GM12878 (cell line): ENCODE measurements at regions of chr16 and their contacts with region 1.

Region 1: GRCh38 chr16:86343027-86343787 is 167.1 kb upstream of the FOXF1 start:
- DNase-seq: no peak
- ATAC-seq: no peak
- H3K4me3 ChIP-seq: no peak overlapping the region
- H3K27ac ChIP-seq: no peak overlapping the region
- H3K4me1 ChIP-seq: no peaks in the 10 kb centered on the region
- H3K27me3 ChIP-seq: peaks cover 2 to 5% of the 10 kb centered on the region in 2 experiments; a peak in 3 of 4 replicates
- CTCF ChIP-seq: no peak
- EP300 ChIP-seq: no peak
- POLR2A ChIP-seq: no peak
- RAD21 ChIP-seq: no peak

Region 2: DNA sequence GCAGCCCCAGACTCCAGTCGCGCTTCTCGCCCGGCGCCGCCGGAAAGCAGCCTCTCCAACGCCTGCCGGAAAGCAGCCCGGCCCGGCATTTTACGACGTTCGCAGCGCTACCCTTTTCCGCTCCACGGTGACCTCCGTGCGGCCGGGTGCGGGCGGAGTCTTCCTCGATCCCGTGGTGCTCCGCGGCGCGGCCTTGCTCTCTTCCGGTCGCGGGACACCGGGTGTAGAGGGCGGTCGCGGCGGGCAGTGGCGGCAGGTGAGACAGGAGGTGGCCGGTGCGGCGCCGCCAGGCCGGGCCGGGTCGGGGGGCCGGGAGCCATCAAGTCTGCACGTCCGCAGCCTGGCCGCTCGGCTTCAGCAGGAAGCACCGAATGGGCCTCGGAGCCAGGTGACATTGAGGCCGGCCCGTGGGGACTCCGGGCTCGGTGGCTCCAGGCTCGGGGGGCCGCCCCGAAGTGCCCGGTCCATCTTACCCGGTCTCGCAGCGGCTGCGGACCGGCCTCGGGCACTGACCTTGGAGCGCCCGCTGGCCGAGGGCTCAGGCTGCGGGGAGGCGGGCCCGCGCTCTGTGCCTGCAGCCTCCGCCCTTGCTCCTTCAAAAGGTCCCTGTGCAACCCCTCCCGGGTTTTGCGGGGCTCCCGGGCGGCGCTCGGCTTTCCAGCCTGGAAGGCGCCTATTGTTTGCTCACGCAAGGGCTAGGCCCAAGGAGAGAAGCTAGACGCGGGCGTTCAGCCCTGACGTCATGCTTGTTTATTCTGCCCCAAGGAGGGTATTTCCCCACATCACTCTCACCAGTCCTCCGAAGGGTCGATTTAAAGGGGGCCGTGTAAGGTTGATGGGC is 543.5 kb before region 1 on chr16 and contains the starts of genes COX4I1 and EMC8:
- CTCF ChIA-PET with region 1: no interaction called
- POLR2A ChIA-PET with region 1: no interaction called
- RAD21 ChIA-PET with region 1: no interaction called
- SMC1A ChIA-PET with region 1: no interaction called
- in situ Hi-C with region 1: loop called (anchors 25 kb)
- intact Hi-C with region 1: no loop called
- DNase-seq: peak; percentile 63
- ATAC-seq: peak; percentile 95
- H3K4me3 ChIP-seq: peak within 1 kb of the TSS; percentile 95
- H3K27ac ChIP-seq: peak within 1 kb of the TSS; percentile 94
- H3K4me1 ChIP-seq: peaks cover 11% of the 10 kb centered on the region
- H3K27me3 ChIP-seq: no peaks in the 10 kb centered on the region
- CTCF ChIP-seq: no peak
- EP300 ChIP-seq: peak in 1 of 2 experiments; percentile 41; a peak in 1 of 4 replicates
- POLR2A ChIP-seq: peak; percentile 98
- RAD21 ChIP-seq: no peak
- polyA plus RNA-seq, gene COX4I1: 1,747 to 1,889 TPM
- polyA plus RNA-seq, gene EMC8: 7.8 to 16.5 TPM

Region 3: GRCh38 chr16:86457501-86458148 is 114.4 kb after region 1 on chr16:
- CTCF ChIA-PET with region 1: no interaction called
- POLR2A ChIA-PET with region 1: no interaction called
- RAD21 ChIA-PET with region 1: no interaction called
- SMC1A ChIA-PET with region 1: no interaction called
- in situ Hi-C with region 1: no loop called
- intact Hi-C with region 1: no loop called
- DNase-seq: no peak
- ATAC-seq: no peak
- H3K4me3 ChIP-seq: no peak overlapping the region
- H3K27ac ChIP-seq: no peak overlapping the region
- H3K4me1 ChIP-seq: no peaks in the 10 kb centered on the region
- H3K27me3 ChIP-seq: no peaks in the 10 kb centered on the region
- CTCF ChIP-seq: no peak
- EP300 ChIP-seq: no peak
- POLR2A ChIP-seq: no peak
- RAD21 ChIP-seq: no peak

Region 4: GRCh38 chr16:86519649-86520316 is 176.6 kb after region 1 on chr16:
- CTCF ChIA-PET with region 1: interaction called, 15 read pairs
- POLR2A ChIA-PET with region 1: no interaction called
- RAD21 ChIA-PET with region 1: no interaction called
- SMC1A ChIA-PET with region 1: interaction called, 6 read pairs
- in situ Hi-C with region 1: loop called (anchors 5 kb)
- intact Hi-C with region 1: loop called (anchors 1 kb)
- DNase-seq: no peak
- ATAC-seq: peak; percentile 76
- H3K4me3 ChIP-seq: no peak overlapping the region
- H3K27ac ChIP-seq: no peak overlapping the region
- H3K4me1 ChIP-seq: no peaks in the 10 kb centered on the region
- H3K27me3 ChIP-seq: peaks cover 5 to 9% of the 10 kb centered on the region in 2 experiments
- CTCF ChIP-seq: peak; percentile 86 to 92 (median 87)
- EP300 ChIP-seq: no peak
- POLR2A ChIP-seq: no peak
- RAD21 ChIP-seq: peak; percentile 79